ENCODE measurements at regions of chr13 and their contacts with region 1.

Region 1: DNA sequence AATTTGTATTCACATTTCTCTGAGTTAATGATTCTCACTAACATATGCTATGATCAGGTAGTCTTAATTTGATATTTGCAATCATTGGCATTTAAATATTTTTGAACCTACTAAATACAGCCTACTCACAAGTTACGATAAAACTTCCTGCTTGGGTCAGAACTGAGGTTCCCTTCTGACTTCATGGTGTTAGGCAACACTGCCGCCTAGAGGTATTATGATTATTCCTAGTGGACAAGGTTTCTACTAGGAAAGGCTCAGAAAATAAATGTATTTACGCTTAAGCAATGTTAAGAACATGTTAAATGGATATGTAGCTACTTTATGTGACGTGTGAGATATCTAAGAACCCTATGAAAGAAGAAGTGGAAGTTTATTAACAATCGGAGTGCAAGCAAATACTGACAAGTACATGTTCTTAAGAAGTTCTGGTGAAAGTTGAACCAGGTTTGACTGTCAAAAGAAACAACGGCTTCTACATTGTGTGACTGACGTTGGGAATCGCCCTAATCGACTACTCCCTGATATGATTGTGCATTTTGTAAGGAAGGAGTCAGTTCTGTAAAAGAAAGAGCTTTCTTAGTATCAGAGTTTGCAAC is 1395.8 kb downstream of the SLITRK5 start:
- DNase-seq: no peak
- ATAC-seq: peak; percentile 92
- H3K4me3 ChIP-seq: no peak overlapping the region
- H3K27ac ChIP-seq: no peak overlapping the region
- H3K4me1 ChIP-seq: no peaks in the 10 kb centered on the region
- H3K27me3 ChIP-seq: no peaks in the 10 kb centered on the region
- CTCF ChIP-seq: peak; percentile 36 to 66 (median 65)
- EP300 ChIP-seq: no peak
- POLR2A ChIP-seq: no peak
- RAD21 ChIP-seq: peak; percentile 76

Region 2: DNA sequence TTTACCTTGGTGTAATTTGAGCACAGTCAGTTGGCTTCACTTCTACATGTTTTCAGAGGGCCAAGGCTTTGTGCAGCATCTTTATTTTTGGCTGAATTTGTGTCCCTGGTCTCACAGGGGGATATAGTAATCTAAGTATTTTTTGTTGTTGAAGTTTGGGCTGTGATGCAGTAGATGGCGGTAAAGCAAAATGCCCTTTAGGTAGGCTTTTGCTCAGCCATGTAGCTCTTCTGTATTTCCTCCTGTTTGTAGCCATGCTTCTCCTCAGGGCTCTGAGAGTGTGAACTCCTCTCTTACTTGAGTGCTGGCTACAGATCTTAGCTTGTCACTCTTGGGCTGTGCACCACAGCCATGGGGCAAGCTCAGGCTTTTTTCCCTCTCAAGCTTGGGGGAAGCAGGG is 1067.2 kb before region 1 on chr13:
- CTCF ChIA-PET with region 1: interaction called, 3 read pairs
- POLR2A ChIA-PET with region 1: no interaction called
- RAD21 ChIA-PET with region 1: no interaction called
- SMC1A ChIA-PET with region 1: interaction called, 3 read pairs
- in situ Hi-C with region 1: no loop called
- intact Hi-C with region 1: loop called (anchors 10 kb)
- DNase-seq: no peak
- ATAC-seq: peak; percentile 53; the same call in 2 of the 3 replicates
- H3K4me3 ChIP-seq: no peak overlapping the region
- H3K27ac ChIP-seq: no peak overlapping the region
- H3K4me1 ChIP-seq: no peaks in the 10 kb centered on the region
- H3K27me3 ChIP-seq: no peaks in the 10 kb centered on the region
- CTCF ChIP-seq: peak in 1 of 3 experiments; percentile 15; a peak in 1 of 6 replicates
- EP300 ChIP-seq: no peak
- POLR2A ChIP-seq: no peak
- RAD21 ChIP-seq: no peak

Region 3: GRCh38 chr13:88068975-88069374 is 998.0 kb before region 1 on chr13:
- CTCF ChIA-PET with region 1: interaction called, 3 read pairs
- POLR2A ChIA-PET with region 1: no interaction called
- RAD21 ChIA-PET with region 1: no interaction called
- SMC1A ChIA-PET with region 1: interaction called, 4 read pairs
- in situ Hi-C with region 1: no loop called
- intact Hi-C with region 1: loop called (anchors 5 kb)
- DNase-seq: no peak
- ATAC-seq: peak; percentile 60
- H3K4me3 ChIP-seq: no peak overlapping the region
- H3K27ac ChIP-seq: no peak overlapping the region
- H3K4me1 ChIP-seq: no peaks in the 10 kb centered on the region
- H3K27me3 ChIP-seq: no peaks in the 10 kb centered on the region
- CTCF ChIP-seq: peak in 1 of 3 experiments; percentile 10; a peak in 1 of 6 replicates
- EP300 ChIP-seq: no peak
- POLR2A ChIP-seq: no peak
- RAD21 ChIP-seq: no peak

Region 4: GRCh38 chr13:88411696-88412095 is 655.3 kb before region 1 on chr13:
- CTCF ChIA-PET with region 1: no interaction called
- POLR2A ChIA-PET with region 1: no interaction called
- RAD21 ChIA-PET with region 1: no interaction called
- SMC1A ChIA-PET with region 1: no interaction called
- in situ Hi-C with region 1: no loop called
- intact Hi-C with region 1: loop called (anchors 5 kb)
- DNase-seq: no peak
- ATAC-seq: no peak
- H3K4me3 ChIP-seq: no peak overlapping the region
- H3K27ac ChIP-seq: no peak overlapping the region
- H3K4me1 ChIP-seq: no peaks in the 10 kb centered on the region
- H3K27me3 ChIP-seq: no peaks in the 10 kb centered on the region
- CTCF ChIP-seq: no peak
- EP300 ChIP-seq: no peak
- POLR2A ChIP-seq: no peak
- RAD21 ChIP-seq: no peak

Region 5: DNA sequence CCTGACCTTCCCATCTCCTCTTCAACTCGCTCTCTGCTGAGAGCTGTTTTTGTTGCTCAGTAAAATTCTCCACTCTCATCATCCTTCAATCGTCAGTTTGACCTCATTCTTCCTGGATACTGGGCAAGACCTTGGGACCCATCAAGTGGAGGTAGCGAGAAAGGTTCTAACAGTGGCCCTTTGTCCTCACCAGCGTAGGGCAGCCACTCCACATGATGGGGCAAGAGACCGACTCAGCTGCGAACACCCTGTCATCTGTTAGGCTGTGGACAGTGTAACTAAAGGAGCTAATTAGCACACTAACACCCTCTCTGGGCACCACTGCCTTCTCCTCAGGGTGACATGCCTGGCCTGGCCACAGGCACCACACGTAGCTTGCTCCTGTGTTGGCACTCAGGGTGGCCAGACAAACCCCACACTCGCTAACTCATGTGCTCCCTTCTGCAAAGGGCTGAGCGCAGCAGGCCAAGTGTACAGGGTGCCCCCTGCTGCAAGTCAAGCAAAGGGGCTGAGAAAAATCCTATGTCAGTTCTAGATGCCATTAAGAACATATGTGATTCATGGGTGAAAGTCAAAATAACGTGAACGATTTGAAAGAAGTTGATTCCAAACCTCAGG is 179.8 kb before region 1 on chr13:
- CTCF ChIA-PET with region 1: no interaction called
- POLR2A ChIA-PET with region 1: no interaction called
- RAD21 ChIA-PET with region 1: no interaction called
- SMC1A ChIA-PET with region 1: interaction called, 3 read pairs
- in situ Hi-C with region 1: no loop called
- intact Hi-C with region 1: loop called (anchors 5 kb)
- DNase-seq: no peak
- ATAC-seq: peak; percentile 80
- H3K4me3 ChIP-seq: no peak overlapping the region
- H3K27ac ChIP-seq: no peak overlapping the region
- H3K4me1 ChIP-seq: no peaks in the 10 kb centered on the region
- H3K27me3 ChIP-seq: no peaks in the 10 kb centered on the region
- CTCF ChIP-seq: peak in 2 of 3 experiments; percentile 13 to 33; a peak in 3 of 6 replicates
- EP300 ChIP-seq: no peak
- POLR2A ChIP-seq: no peak
- RAD21 ChIP-seq: no peak

Region 6: GRCh38 chr13:89115307-89115706 is 48.3 kb after region 1 on chr13:
- CTCF ChIA-PET with region 1: no interaction called
- POLR2A ChIA-PET with region 1: no interaction called
- RAD21 ChIA-PET with region 1: no interaction called
- SMC1A ChIA-PET with region 1: no interaction called
- in situ Hi-C with region 1: no loop called
- intact Hi-C with region 1: no loop called
- DNase-seq: no peak
- ATAC-seq: peak; percentile 57; the same call in 2 of the 3 replicates
- H3K4me3 ChIP-seq: no peak overlapping the region
- H3K27ac ChIP-seq: no peak overlapping the region
- H3K4me1 ChIP-seq: no peaks in the 10 kb centered on the region
- H3K27me3 ChIP-seq: no peaks in the 10 kb centered on the region
- CTCF ChIP-seq: peak in 2 of 3 experiments; percentile 11 to 26; a peak in 1 of 6 replicates
- EP300 ChIP-seq: no peak
- POLR2A ChIP-seq: no peak
- RAD21 ChIP-seq: no peak

Region 7: DNA sequence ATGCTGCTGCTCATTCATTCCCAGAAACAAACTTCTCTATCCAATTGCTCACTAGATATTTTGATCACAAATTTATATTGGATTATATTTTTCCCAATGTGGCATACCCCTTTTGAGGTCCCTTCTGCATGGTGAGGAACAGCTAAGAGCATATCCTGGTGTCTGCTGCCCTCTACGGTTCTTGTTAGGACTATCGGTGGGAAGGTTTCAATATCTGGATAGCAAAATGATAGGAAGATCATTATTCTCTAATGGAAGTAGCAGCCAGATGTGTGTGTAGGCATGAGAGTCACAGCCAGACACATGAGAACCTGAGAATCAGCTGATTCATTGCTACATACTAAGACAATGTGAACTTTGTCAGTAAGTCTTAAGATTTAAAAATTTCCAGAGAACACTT is 858.1 kb after region 1 on chr13:
- CTCF ChIA-PET with region 1: no interaction called
- POLR2A ChIA-PET with region 1: no interaction called
- RAD21 ChIA-PET with region 1: no interaction called
- SMC1A ChIA-PET with region 1: no interaction called
- in situ Hi-C with region 1: no loop called
- intact Hi-C with region 1: loop called (anchors 10 kb)
- DNase-seq: no peak
- ATAC-seq: peak; percentile 62
- H3K4me3 ChIP-seq: no peak overlapping the region
- H3K27ac ChIP-seq: no peak overlapping the region
- H3K4me1 ChIP-seq: no peaks in the 10 kb centered on the region
- H3K27me3 ChIP-seq: no peaks in the 10 kb centered on the region
- CTCF ChIP-seq: peak in 2 of 3 experiments; percentile 34 to 52; a peak in 3 of 6 replicates
- EP300 ChIP-seq: no peak
- POLR2A ChIP-seq: no peak
- RAD21 ChIP-seq: peak; percentile 44; the same call in 1 of the 2 replicates